A549 (cell line): ENCODE measurements at regions of chr7 and their contacts with region 1.

Region 1: GRCh38 chr7:92528188-92528957 is at the starts of genes PEX1 and RBM48:
- DNase-seq: peak; percentile 98 to 99
- ATAC-seq: peak; percentile 93 to 97
- H3K4me3 ChIP-seq: peak within 1 kb of the TSS; percentile 76
- H3K27ac ChIP-seq: peak within 1 kb of the TSS; percentile 72 to 88
- H3K4me1 ChIP-seq: peaks cover 16% of the 10 kb centered on the region; the same call in 2 of the 3 replicates
- CTCF ChIP-seq: peak; percentile 64
- EP300 ChIP-seq: no peak
- POLR2A ChIP-seq: peak; percentile 56
- RAD21 ChIP-seq: no peak
- polyA plus RNA-seq, gene PEX1: 22.7 and 23.2 TPM in 2 replicates
- polyA plus RNA-seq, gene RBM48: 6.5 and 7.0 TPM in 2 replicates

Region 2: DNA sequence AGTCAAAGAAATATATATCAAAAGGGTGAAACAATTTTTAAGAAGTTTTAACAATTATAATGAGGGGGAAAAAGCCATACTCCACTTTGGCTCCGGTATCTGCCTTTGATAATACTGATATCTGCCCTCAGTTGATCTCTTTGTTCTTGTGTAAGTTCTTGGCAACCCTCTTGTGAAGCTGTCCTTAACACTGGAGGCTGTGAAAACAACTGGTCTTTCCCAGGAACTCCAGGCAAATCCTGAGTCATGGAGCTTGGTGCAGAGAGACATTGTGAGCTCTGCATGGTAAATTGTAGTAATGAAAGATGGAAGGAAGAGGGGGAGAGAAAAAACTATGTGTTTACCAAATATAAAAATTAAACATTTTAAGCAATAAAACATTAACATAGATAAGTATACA is 38.7 kb before region 1 on chr7:
- CTCF ChIA-PET with region 1: no interaction called
- POLR2A ChIA-PET with region 1: no interaction called
- DNase-seq: no peak
- ATAC-seq: no peak
- H3K4me3 ChIP-seq: no peak overlapping the region
- H3K27ac ChIP-seq: no peak overlapping the region
- H3K4me1 ChIP-seq: no peaks in the 10 kb centered on the region
- CTCF ChIP-seq: no peak
- EP300 ChIP-seq: no peak
- POLR2A ChIP-seq: no peak
- RAD21 ChIP-seq: no peak

Region 3: GRCh38 chr7:92517631-92518030 is 10.7 kb before region 1 on chr7:
- CTCF ChIA-PET with region 1: interaction called, 8 read pairs
- POLR2A ChIA-PET with region 1: interaction called, 12 read pairs
- DNase-seq: no peak
- ATAC-seq: no peak
- H3K4me3 ChIP-seq: no peak overlapping the region
- H3K27ac ChIP-seq: no peak overlapping the region
- H3K4me1 ChIP-seq: no peaks in the 10 kb centered on the region
- CTCF ChIP-seq: no peak
- EP300 ChIP-seq: no peak
- POLR2A ChIP-seq: no peak
- RAD21 ChIP-seq: no peak